Calu3 (cell line): ENCODE measurements at regions of chr15 and their contacts with region 1.

Region 1: DNA sequence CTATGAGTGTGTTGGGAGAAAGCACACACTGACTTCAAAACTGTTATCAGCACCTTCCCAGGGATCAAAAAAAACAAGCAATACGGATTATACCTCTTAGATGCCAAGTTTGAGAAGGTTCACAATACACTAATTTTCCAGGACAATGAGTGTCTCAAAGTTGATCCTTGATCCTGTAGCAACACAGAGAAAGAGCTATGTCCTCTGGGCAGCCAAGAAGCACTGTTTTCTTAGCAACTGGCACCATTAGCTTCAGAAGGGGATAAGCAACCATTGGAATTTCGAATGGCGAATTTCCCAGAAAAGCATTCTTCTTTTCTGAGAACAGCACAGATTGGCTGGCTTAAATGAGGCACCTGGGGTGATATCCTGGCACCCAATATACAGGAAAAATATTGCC is 270.3 kb upstream of the RORA start:
- DNase-seq: no peak
- H3K4me3 Mint-ChIP-seq: no peak overlapping the region
- H3K27ac Mint-ChIP-seq: no peak overlapping the region
- H3K4me1 Mint-ChIP-seq: no peaks in the 10 kb centered on the region
- H3K27me3 Mint-ChIP-seq: peaks cover 71% of the 10 kb centered on the region
- CTCF ChIP-seq: no peak

Region 2: DNA sequence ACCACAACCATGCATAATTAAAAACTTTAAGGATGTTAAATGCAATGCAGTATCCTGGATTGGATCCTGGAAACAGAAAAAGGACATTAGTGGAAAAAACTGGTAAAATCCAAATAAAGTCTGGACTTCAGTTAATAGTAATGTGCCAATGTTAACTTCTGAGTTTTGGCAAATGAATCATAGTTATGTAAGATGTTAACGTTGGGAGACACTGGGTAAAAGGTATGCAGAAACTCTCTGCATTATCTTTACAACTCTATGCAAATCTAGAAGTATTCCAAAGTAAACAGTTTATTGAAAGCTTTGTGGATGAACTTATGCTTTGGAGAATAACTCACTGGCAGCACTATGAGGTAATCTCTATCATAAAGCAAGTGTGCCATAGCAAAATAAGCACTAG is 627.6 kb before region 1 on chr15:
- CTCF ChIA-PET with region 1: no interaction called
- intact Hi-C with region 1: loop called (anchors 10 kb)
- DNase-seq: no peak
- H3K4me3 Mint-ChIP-seq: no peak overlapping the region
- H3K27ac Mint-ChIP-seq: no peak overlapping the region
- H3K4me1 Mint-ChIP-seq: no peaks in the 10 kb centered on the region
- H3K27me3 Mint-ChIP-seq: peaks cover 21% of the 10 kb centered on the region
- CTCF ChIP-seq: no peak

Region 3: DNA sequence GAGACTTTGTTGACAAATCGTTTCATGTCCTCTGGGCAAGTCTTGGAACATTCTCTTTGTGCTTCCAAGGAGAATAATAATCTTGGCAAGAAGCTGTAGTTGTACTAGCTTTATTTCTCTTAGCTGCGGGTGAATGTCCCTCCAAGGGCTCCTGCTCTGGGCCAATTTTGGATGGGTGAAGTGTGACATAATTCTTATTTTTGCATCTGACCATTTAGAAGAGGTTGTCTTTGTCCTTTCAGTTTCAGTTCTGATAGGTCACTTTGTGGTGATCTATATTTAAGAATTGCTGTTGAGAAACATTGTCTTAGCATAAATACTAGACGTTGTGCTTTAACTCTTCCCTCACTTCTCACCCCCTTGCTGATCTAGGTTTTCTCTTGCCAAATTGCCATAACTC is 105.4 kb before region 1 on chr15:
- CTCF ChIA-PET with region 1: no interaction called
- intact Hi-C with region 1: no loop called
- DNase-seq: no peak
- H3K4me3 Mint-ChIP-seq: no peak overlapping the region
- H3K27ac Mint-ChIP-seq: no peak overlapping the region
- H3K4me1 Mint-ChIP-seq: no peaks in the 10 kb centered on the region
- H3K27me3 Mint-ChIP-seq: peaks cover 29% of the 10 kb centered on the region
- CTCF ChIP-seq: no peak